ENCODE measurements at regions of chr16 and their contacts with region 1.

Region 1: DNA sequence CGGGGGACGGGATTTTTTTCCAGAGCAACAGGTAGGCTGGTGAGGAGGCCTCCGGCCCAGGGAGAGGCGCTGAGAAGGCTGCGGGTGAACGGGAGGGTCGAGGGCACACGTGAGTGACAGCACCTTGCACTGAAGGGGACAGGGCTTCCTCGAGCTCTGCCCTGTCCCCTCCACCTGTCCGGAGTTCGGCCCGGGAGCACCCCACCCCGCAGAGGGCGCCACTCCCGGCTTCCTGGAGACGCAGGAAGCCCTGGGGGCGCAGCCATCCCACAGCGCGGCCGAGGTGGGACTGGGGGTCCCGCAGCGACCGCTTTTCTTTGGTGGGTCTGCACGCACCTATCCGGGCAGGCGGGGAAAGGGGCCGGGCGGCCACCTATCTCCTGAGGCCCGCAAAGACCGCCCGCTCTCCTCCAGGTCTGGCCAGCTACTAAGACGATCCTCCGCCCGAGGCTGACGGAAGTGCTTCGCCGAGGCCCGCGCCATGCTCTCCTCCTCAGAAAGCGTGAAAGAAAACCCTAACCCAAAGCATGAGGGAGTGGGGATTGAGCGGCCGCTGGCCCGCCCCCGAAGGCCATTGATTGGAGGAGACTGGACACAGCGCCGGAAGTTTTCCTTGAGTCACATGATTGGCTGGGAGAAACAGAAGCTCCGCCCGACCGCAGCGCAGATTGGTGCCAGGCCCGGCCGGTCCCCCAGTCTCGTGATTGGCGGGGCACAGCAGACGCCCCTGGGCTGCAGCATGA is 34.3 kb downstream of the DDX19A start:
- DNase-seq: peak; percentile 91 to 98 (median 94)
- ATAC-seq: peak; percentile 90
- H3K4me3 ChIP-seq: peak overlapping the region; percentile 68
- H3K4me3 Mint-ChIP-seq: peak overlapping the region; percentile 98
- H3K27ac ChIP-seq: peak overlapping the region; percentile 64 to 79
- H3K27ac Mint-ChIP-seq: peak overlapping the region; percentile 92
- H3K4me1 ChIP-seq: peaks cover 32% of the 10 kb centered on the region
- H3K4me1 Mint-ChIP-seq: peaks cover 25% of the 10 kb centered on the region
- H3K27me3 ChIP-seq: no peaks in the 10 kb centered on the region
- H3K27me3 Mint-ChIP-seq: no peaks in the 10 kb centered on the region
- CTCF ChIP-seq: peak; percentile 38

Region 2: GRCh38 chr16:70298988-70299938 is 81.8 kb before region 1 on chr16 and contains the start of gene DDX19B:
- CTCF ChIA-PET with region 1: no interaction called
- POLR2A ChIA-PET with region 1: interaction called, 24 read pairs
- intact Hi-C with region 1: no loop called
- DNase-seq: peak; percentile 33 to 78 (median 48)
- ATAC-seq: peak; percentile 88
- H3K4me3 ChIP-seq: peak within 1 kb of the TSS; percentile 88
- H3K4me3 Mint-ChIP-seq: peak within 1 kb of the TSS; percentile 96
- H3K27ac ChIP-seq: peak within 1 kb of the TSS; percentile 88 to 97
- H3K27ac Mint-ChIP-seq: peak within 1 kb of the TSS; percentile 98
- H3K4me1 ChIP-seq: peaks cover 25% of the 10 kb centered on the region
- H3K4me1 Mint-ChIP-seq: peaks cover 45% of the 10 kb centered on the region
- H3K27me3 ChIP-seq: no peaks in the 10 kb centered on the region
- H3K27me3 Mint-ChIP-seq: no peaks in the 10 kb centered on the region
- CTCF ChIP-seq: no peak
- total RNA-seq, gene DDX19B: 23.0 TPM

Region 3: DNA sequence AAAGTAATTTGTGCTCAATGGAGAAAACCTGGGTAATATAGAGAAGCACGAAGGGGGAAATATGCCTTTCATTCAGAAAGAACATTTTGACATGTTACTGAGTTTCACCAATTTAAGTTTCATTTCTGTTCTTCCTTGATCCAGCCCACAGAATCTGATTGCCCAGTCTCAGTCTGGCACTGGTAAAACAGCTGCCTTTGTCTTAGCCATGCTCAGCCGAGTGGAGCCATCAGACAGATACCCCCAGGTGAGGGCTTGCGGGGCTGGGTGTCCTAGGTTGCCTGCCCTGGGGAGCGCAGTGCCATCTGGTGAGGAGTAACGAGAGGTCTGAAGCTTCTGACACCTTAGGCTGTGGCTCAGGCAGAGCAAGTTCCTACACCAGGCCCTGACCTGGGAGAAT is 16.6 kb before region 1 on chr16:
- CTCF ChIA-PET with region 1: interaction called, 4 read pairs
- POLR2A ChIA-PET with region 1: interaction called, 23 read pairs
- intact Hi-C with region 1: no loop called
- DNase-seq: no peak
- ATAC-seq: no peak
- H3K4me3 ChIP-seq: no peak overlapping the region
- H3K4me3 Mint-ChIP-seq: no peak overlapping the region
- H3K27ac ChIP-seq: no peak overlapping the region
- H3K27ac Mint-ChIP-seq: no peak overlapping the region
- H3K4me1 ChIP-seq: no peaks in the 10 kb centered on the region
- H3K4me1 Mint-ChIP-seq: no peaks in the 10 kb centered on the region
- H3K27me3 ChIP-seq: no peaks in the 10 kb centered on the region
- H3K27me3 Mint-ChIP-seq: no peaks in the 10 kb centered on the region
- CTCF ChIP-seq: no peak

Region 4: DNA sequence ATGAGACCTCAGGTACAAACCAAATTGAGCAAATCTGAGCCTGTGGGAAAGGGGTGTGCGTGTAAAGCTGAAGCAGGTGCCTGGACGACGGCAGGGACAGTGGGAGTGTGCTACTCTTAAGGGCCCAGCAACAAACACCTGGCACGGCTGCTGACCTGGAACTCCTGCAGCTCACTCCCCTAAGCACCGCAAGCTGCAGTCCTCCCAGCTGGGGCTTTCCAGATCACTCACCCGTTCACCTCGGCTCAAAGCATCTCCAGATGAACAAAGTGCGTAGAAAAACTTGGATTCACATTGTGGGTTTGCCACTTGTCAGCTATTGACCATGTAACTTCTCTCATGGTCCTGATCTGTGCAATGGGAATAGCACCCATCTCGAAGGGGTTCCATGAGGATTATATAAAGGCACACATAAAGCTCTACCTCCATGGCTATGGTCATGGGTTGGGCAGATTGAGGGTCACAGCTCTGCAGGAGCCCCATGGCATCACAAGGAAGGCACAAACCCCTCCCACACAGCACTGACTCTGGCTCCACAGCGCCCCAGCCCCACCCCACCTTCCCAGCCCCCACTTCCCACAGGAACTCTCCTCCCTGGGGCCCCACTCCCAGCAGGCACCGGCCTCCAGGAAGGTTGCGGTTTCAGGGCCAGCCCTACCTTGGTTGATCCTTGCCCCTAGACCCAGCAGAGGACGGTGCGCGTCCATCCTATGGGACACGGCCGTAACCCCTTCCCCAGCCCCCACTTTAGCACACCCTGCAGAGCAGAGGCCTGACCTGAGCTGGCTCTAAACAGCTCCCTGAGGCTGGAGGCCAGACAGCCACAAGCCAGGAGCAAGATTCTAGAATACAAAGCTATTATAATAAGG is 36.0 kb after region 1 on chr16:
- CTCF ChIA-PET with region 1: no interaction called
- POLR2A ChIA-PET with region 1: interaction called, 26 read pairs
- intact Hi-C with region 1: no loop called
- DNase-seq: peak in 1 of 14 experiments; percentile 9
- ATAC-seq: no peak
- H3K4me3 ChIP-seq: no peak overlapping the region
- H3K4me3 Mint-ChIP-seq: no peak overlapping the region
- H3K27ac ChIP-seq: no peak overlapping the region
- H3K27ac Mint-ChIP-seq: peak overlapping the region; percentile 71
- H3K4me1 ChIP-seq: peaks cover 44% of the 10 kb centered on the region
- H3K4me1 Mint-ChIP-seq: peaks cover 53% of the 10 kb centered on the region
- H3K27me3 ChIP-seq: no peaks in the 10 kb centered on the region
- H3K27me3 Mint-ChIP-seq: no peaks in the 10 kb centered on the region
- CTCF ChIP-seq: no peak

Region 5: DNA sequence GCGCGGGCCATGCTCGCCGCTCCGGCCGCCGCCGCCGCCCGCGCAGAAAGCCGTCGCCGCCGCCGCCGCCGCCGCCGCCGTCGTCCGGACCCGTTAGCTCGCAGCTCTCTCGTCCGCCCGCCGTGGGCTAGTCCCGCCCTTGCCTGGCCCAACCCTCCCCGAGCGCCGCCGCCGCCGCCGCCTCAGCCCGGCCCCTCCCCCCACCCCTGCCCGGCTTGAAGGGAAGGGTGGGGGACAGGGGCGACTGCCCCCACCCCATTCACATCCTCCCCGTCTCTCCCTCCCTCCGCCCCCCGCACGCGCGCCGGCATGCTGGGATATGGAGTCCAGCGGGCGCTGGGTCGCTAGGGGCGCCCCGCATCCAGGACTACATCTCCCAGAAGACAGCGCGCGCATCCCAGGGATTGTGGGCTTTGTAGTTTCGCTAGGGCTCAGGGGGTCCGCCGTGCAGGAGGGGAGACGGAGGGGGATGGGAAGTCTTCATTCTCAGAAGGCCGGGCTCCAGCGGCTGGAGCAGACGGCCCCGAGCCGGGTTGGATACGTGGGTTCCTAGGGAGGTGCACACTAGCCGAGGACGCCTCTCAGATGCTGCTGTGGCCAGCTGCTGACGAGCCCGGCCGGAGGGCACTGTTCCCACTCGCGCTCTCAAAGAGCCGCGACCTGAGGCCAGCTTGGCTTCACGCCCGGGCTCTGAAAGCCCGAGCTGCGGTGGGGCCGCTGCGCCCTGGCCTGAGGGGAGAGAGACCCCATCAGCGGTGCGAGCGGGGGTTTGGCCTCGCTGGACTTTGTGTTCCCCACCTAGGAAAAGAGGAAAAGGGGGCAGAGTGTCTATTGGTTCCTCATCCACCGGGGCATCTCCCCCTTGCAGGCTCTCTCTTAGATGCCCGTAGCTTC is 58.2 kb after region 1 on chr16 and contains the start of gene ST3GAL2:
- CTCF ChIA-PET with region 1: no interaction called
- POLR2A ChIA-PET with region 1: interaction called, 53 read pairs
- intact Hi-C with region 1: loop called (anchors 1 to 2 kb)
- DNase-seq: peak; percentile 87 to 96 (median 94)
- ATAC-seq: peak; percentile 97
- H3K4me3 ChIP-seq: peak within 1 kb of the TSS; percentile 94
- H3K4me3 Mint-ChIP-seq: peak within 1 kb of the TSS; percentile 92
- H3K27ac ChIP-seq: peak within 1 kb of the TSS in 1 of 2 donors; percentile 33
- H3K27ac Mint-ChIP-seq: peak within 1 kb of the TSS; percentile 82
- H3K4me1 ChIP-seq: peaks cover 33% of the 10 kb centered on the region
- H3K4me1 Mint-ChIP-seq: peaks cover 45% of the 10 kb centered on the region
- H3K27me3 ChIP-seq: no peaks in the 10 kb centered on the region
- H3K27me3 Mint-ChIP-seq: no peaks in the 10 kb centered on the region
- CTCF ChIP-seq: no peak
- total RNA-seq, gene ST3GAL2: 9.8 to 11.1 TPM

Measured in CD4-positive, alpha-beta T cell (primary cell).